Endothelial cell of umbilical vein (primary cell): ENCODE measurements at regions of chr12 and their contacts with region 1.

Region 1: GRCh38 chr12:56346703-56347102 is 8.0 kb downstream of the IL23A start:
- DNase-seq: no peak
- H3K4me3 ChIP-seq: no peak overlapping the region
- H3K27ac ChIP-seq: no peak overlapping the region
- H3K4me1 ChIP-seq: no peaks in the 10 kb centered on the region
- H3K27me3 ChIP-seq: no peaks in the 10 kb centered on the region
- CTCF ChIP-seq: no peak
- POLR2A ChIP-seq: no peak

Region 2: GRCh38 chr12:56408799-56409417 is 62.2 kb after region 1 on chr12:
- CTCF ChIA-PET with region 1: no interaction called
- POLR2A ChIA-PET with region 1: interaction called, 4 read pairs
- dilution Hi-C with region 1: loop called (anchors 10 kb)
- intact Hi-C with region 1: no loop called
- DNase-seq: no peak
- H3K4me3 ChIP-seq: no peak overlapping the region
- H3K27ac ChIP-seq: no peak overlapping the region
- H3K4me1 ChIP-seq: no peaks in the 10 kb centered on the region
- H3K27me3 ChIP-seq: no peaks in the 10 kb centered on the region
- CTCF ChIP-seq: no peak
- POLR2A ChIP-seq: no peak